Activated T-helper 1 cell treated with anti-CD3 and anti-CD28 coated beads, Interleukin-12 subunit alpha, Interleukin-12 subunit beta, Interleukin-2, Interleukin-4 antibody, amounts not matched to agents 30 ng/mL and 10 ng/mL and 1 ng/mL, durations not matched to agents 14 hours and 24 hours and 36 hours (primary cell): ENCODE measurements at regions of chr1 and their contacts with region 1.

Region 1: GRCh38 chr1:212162635-212163034 is 122.6 kb upstream of the PPP2R5A start:
- DNase-seq: peak; percentile 20
- H3K4me3 Mint-ChIP-seq: peak overlapping the region; percentile 41
- H3K27ac Mint-ChIP-seq: peak overlapping the region; percentile 78
- H3K4me1 Mint-ChIP-seq: peaks cover 35% of the 10 kb centered on the region
- H3K27me3 Mint-ChIP-seq: no peaks in the 10 kb centered on the region

Region 2: DNA sequence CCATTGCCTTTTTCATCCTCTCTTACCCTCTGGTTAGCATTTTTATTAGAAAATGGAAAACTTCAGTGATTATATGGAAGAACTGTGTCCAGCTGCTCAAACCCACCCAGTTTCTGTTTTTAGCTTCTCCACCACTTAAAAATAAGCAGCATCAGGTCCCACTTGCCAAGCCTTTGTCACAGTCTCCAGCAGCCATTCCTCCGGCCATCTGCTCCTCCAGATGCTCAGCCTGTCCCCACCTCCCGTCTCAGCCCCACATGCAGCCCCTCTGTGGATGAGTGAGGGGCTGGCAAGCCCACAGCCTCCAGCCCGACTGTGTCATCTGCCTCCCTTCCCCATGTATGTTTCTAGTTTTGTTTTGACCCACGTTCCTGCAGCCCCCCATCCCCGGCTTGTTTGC is 1544.3 kb before region 1 on chr1:
- intact Hi-C with region 1: no loop called
- DNase-seq: no peak
- H3K4me3 Mint-ChIP-seq: no peak overlapping the region
- H3K27ac Mint-ChIP-seq: no peak overlapping the region
- H3K4me1 Mint-ChIP-seq: no peaks in the 10 kb centered on the region
- H3K27me3 Mint-ChIP-seq: peaks cover 2% of the 10 kb centered on the region

Region 3: DNA sequence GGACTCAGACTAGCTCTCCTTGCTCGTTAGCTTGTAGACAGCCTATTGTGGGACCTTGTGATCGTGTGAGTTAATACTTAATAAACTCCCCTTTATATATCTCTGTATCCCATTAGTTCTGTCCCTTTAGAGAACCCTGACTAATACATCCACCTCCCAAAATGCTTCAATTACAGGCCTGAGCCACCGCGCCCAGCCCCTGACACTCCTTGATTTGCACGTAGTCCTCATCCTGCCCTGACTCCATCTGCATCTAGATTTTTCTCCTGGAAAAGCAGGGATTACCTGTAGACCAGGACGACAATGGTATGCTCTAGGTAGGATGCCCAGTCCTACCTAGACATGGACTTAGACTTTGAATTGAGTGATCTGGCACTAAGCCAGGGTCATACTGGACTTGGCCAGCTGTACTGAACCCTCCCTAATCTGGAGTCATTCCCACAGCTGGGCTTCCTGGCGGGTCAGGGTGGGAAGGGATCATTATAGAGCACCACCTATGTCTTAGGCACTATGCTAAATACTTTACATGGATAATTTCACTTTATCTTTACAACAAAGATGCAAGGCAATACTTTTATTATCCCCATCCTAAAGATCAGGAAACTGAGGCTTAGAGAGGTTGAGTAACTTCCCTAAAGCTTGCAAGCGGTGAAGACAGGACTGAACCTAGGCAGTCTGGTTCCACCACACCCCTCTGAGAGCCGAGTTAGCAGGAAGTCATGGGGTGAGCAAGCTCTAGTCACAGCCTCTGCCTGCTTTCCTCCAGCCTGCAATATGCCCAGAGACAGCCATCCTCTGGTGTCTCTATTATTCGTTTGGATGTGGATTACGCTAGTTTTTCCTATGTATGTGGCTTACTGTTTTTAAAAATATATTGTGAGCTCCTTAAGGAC is 37.7 kb before region 1 on chr1:
- intact Hi-C with region 1: loop called (anchors 5 kb)
- DNase-seq: no peak
- H3K4me3 Mint-ChIP-seq: no peak overlapping the region
- H3K27ac Mint-ChIP-seq: no peak overlapping the region
- H3K4me1 Mint-ChIP-seq: peaks cover 28% of the 10 kb centered on the region
- H3K27me3 Mint-ChIP-seq: no peaks in the 10 kb centered on the region

Region 4: DNA sequence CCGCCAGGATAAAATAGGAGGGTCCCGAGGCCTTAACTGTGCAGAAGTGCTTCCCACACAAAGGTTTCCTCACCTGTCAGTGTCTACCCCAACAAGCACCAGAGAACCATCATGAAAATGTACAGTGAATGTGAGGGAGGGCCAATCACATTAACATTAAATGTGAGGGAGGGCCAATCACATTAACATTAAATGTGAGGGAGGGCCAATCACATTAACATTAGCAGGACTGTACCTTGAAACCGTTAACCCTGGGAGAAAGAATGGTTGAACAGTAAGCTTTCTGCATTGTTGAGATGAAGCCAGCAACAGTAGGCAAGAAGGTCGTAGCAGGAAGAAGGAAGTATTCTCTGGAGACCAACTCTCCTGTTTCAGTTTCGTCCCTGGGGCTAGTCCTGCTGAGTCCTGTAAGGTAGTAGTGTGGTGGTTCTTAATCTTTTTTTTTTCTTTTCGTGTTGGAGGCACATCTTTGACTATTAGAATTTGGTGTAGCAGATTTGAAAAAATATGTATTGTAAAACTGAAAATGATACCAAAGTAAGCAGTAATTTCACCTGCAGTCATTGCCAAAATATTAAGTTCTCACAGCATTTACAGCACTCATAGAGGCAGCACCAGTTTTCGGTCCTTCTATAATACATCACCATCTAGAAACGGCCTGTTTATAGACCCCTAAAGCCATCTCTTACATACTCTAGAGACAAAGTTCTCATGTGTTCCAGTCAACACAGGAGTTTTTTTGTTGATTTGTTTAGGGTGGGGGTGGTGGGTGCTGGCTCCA is 24.0 kb after region 1 on chr1:
- intact Hi-C with region 1: loop called (anchors 2 kb)
- DNase-seq: peak; percentile 16
- H3K4me3 Mint-ChIP-seq: peak overlapping the region; percentile 62
- H3K27ac Mint-ChIP-seq: peak overlapping the region; percentile 88
- H3K4me1 Mint-ChIP-seq: peaks cover 55% of the 10 kb centered on the region
- H3K27me3 Mint-ChIP-seq: no peaks in the 10 kb centered on the region